CD8-positive, alpha-beta T cell (primary cell): ENCODE measurements at regions of chr1 and their contacts with region 1.

Region 1: GRCh38 chr1:160607011-160607671 is 27.8 kb upstream of the CD84 start:
- DNase-seq: peak in 8 of 9 experiments; percentile 35 to 91 (median 62)
- ATAC-seq: peak; percentile 99
- H3K4me3 ChIP-seq: no peak overlapping the region
- H3K4me3 Mint-ChIP-seq: peak overlapping the region; percentile 27
- H3K27ac ChIP-seq: peak overlapping the region in 1 of 2 experiments; percentile 35
- H3K27ac Mint-ChIP-seq: peak overlapping the region; percentile 88
- H3K4me1 ChIP-seq: peaks cover 14% of the 10 kb centered on the region
- H3K4me1 Mint-ChIP-seq: peaks cover 41% of the 10 kb centered on the region
- H3K27me3 ChIP-seq: no peaks in the 10 kb centered on the region
- H3K27me3 Mint-ChIP-seq: no peaks in the 10 kb centered on the region
- CTCF ChIP-seq: peak; percentile 84

Region 2: DNA sequence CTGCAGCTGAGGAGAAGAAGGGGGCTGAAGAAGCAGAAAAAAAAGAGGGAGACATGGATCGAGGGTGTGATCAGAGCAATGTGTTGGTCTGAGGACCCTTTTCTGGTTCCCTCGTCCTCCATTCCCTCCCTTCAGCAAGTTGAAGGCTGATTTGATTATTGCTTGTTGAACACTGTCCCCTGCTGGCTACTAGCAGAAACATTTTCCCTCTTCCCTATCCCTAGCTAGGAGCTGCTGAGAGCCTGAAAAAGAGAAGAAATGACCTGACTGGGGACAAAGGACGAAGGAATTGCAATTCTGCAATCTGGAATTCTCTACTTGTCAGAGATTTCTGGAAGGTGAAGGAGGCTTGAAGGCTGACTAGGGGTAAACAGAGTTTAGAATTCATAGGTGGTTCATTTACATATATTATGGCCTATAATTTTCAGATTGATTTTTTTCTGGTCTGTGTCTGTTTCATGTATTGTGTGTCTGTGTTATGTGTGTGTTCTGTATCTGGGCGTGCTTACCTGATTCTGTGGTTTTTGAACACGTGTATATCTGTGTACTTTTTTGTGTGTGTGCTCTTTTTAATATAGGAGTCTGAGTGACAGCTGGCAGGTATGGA is 230.5 kb before region 1 on chr1:
- CTCF ChIA-PET with region 1: interaction called, 19 read pairs
- POLR2A ChIA-PET with region 1: no interaction called
- intact Hi-C with region 1: loop called in 1 of 2 experiments (anchors 1 kb)
- DNase-seq: peak in 5 of 9 experiments; percentile 13 to 75 (median 53)
- ATAC-seq: peak; percentile 61
- H3K4me3 ChIP-seq: no peak overlapping the region
- H3K4me3 Mint-ChIP-seq: no peak overlapping the region
- H3K27ac ChIP-seq: no peak overlapping the region
- H3K27ac Mint-ChIP-seq: no peak overlapping the region
- H3K4me1 ChIP-seq: peaks cover 12% of the 10 kb centered on the region
- H3K4me1 Mint-ChIP-seq: peaks cover 15% of the 10 kb centered on the region
- H3K27me3 ChIP-seq: no peaks in the 10 kb centered on the region
- H3K27me3 Mint-ChIP-seq: no peaks in the 10 kb centered on the region
- CTCF ChIP-seq: peak; percentile 65

Region 3: DNA sequence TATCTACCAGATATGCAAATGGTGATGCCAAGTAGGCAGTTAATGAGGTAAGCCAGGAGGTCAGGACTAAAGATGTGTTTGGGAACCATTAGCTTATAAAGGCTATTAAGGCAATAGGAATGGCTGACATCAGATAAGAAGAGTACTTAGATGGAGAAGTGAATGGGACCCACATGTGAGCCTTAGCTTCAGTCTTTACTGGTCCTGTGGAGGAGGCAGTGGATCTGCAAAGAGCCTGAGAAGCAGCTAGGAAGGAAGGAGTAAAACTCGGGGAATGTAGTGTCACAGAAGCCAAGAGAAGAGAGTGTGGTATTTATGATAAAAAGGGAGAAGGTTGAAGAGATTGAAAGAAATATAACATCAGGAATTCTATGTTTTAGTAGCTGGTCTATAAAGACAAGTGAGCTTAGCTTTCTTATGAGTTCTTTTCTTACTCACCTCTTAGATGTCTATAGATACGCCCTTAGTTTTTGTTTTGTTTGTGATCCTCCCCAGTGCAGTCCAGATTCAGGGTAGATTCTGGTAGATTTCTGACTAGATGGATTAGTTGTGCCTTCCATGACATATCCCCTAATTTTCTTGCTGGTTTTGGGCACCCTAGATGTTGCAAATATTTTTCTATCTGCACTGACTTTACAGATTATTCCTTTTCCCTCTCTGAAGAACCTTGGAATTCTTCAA is 123.5 kb before region 1 on chr1:
- CTCF ChIA-PET with region 1: interaction called, 24 read pairs
- POLR2A ChIA-PET with region 1: no interaction called
- intact Hi-C with region 1: loop called in 1 of 2 experiments (anchors 5 kb)
- DNase-seq: no peak
- ATAC-seq: no peak
- H3K4me3 ChIP-seq: no peak overlapping the region
- H3K4me3 Mint-ChIP-seq: no peak overlapping the region
- H3K27ac ChIP-seq: peak overlapping the region in 1 of 2 experiments; percentile 36
- H3K27ac Mint-ChIP-seq: peak overlapping the region; percentile 79
- H3K4me1 ChIP-seq: peaks cover 25% of the 10 kb centered on the region
- H3K4me1 Mint-ChIP-seq: peaks cover 55% of the 10 kb centered on the region
- H3K27me3 ChIP-seq: no peaks in the 10 kb centered on the region
- H3K27me3 Mint-ChIP-seq: no peaks in the 10 kb centered on the region
- CTCF ChIP-seq: no peak

Region 4: DNA sequence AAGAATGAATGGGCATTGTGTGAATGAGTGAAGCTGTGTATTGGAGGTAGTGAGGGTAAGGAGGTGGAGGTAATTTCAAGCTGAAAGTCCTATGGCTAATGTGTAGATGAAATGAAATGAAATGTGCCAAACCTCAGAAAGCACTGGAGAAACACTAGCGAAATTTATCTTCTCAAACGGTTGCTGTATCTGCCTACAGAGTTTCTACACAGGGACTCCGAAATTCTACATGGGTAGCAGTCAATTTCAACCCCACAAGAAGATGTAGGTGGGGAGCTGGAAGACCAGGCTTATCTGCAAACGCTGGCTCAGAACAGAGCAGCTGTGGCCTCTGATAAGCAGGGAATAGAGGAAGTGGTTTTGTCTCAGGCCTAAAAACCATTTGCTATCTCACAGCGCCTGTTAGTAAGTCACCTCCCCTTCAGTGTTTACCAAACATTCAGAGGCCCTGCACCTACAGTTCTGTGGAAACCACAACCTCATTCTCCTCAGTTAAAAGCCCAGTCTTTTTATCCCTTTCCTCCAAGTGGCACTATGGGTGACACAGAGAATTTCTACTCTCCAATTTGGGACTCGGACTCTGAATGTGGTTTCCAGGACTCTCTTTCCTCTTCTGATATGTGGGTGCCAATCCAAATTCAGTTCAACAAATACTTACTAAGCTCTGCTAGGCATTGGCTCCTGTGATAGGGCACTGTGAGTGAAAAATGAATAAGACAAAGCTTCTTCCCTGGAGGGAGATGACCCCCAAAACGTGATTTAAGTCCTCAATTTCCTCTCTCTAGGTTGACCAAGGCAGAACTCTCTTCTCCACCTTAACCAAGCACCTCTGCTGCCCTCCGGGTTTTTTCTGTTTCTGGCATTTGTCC is 66.9 kb before region 1 on chr1:
- CTCF ChIA-PET with region 1: interaction called, 232 read pairs
- POLR2A ChIA-PET with region 1: interaction called, 9 read pairs
- intact Hi-C with region 1: loop called (anchors 1 kb)
- DNase-seq: peak; percentile 19 to 86 (median 60)
- ATAC-seq: peak; percentile 91
- H3K4me3 ChIP-seq: peak overlapping the region in 1 of 2 experiments; percentile 19
- H3K4me3 Mint-ChIP-seq: peak overlapping the region; percentile 20
- H3K27ac ChIP-seq: peak overlapping the region; percentile 36 to 76
- H3K27ac Mint-ChIP-seq: peak overlapping the region; percentile 95
- H3K4me1 ChIP-seq: peaks cover 55% of the 10 kb centered on the region
- H3K4me1 Mint-ChIP-seq: peaks cover 58% of the 10 kb centered on the region
- H3K27me3 ChIP-seq: no peaks in the 10 kb centered on the region
- H3K27me3 Mint-ChIP-seq: no peaks in the 10 kb centered on the region
- CTCF ChIP-seq: no peak

Region 5: GRCh38 chr1:160580221-160580812 is 26.8 kb before region 1 on chr1:
- CTCF ChIA-PET with region 1: interaction called, 22 read pairs
- POLR2A ChIA-PET with region 1: interaction called, 4 read pairs
- intact Hi-C with region 1: loop called in 1 of 2 experiments (anchors 2 kb)
- DNase-seq: peak in 1 of 9 experiments; percentile 27
- ATAC-seq: no peak
- H3K4me3 ChIP-seq: peak overlapping the region in 1 of 2 experiments; percentile 8
- H3K4me3 Mint-ChIP-seq: peak overlapping the region; percentile 44
- H3K27ac ChIP-seq: peak overlapping the region; percentile 24 to 70
- H3K27ac Mint-ChIP-seq: peak overlapping the region; percentile 84
- H3K4me1 ChIP-seq: peaks cover 58% of the 10 kb centered on the region
- H3K4me1 Mint-ChIP-seq: peaks cover 77% of the 10 kb centered on the region
- H3K27me3 ChIP-seq: no peaks in the 10 kb centered on the region
- H3K27me3 Mint-ChIP-seq: no peaks in the 10 kb centered on the region
- CTCF ChIP-seq: no peak

Region 6: GRCh38 chr1:160629286-160630210 is 22.4 kb after region 1 on chr1:
- CTCF ChIA-PET with region 1: interaction called, 32 read pairs
- POLR2A ChIA-PET with region 1: interaction called, 5 read pairs
- intact Hi-C with region 1: no loop called
- DNase-seq: peak; percentile 53 to 92 (median 75)
- ATAC-seq: peak; percentile 81
- H3K4me3 ChIP-seq: peak overlapping the region; percentile 19 to 38
- H3K4me3 Mint-ChIP-seq: peak overlapping the region; percentile 76
- H3K27ac ChIP-seq: peak overlapping the region; percentile 91 to 95
- H3K27ac Mint-ChIP-seq: peak overlapping the region; percentile 97
- H3K4me1 ChIP-seq: peaks cover 91% of the 10 kb centered on the region
- H3K4me1 Mint-ChIP-seq: peaks cover 99% of the 10 kb centered on the region
- H3K27me3 ChIP-seq: no peaks in the 10 kb centered on the region
- H3K27me3 Mint-ChIP-seq: no peaks in the 10 kb centered on the region
- CTCF ChIP-seq: no peak

Region 7: GRCh38 chr1:160813215-160813614 is 206.1 kb after region 1 on chr1:
- CTCF ChIA-PET with region 1: no interaction called
- POLR2A ChIA-PET with region 1: no interaction called
- intact Hi-C with region 1: no loop called
- DNase-seq: no peak
- ATAC-seq: peak; percentile 77
- H3K4me3 ChIP-seq: no peak overlapping the region
- H3K4me3 Mint-ChIP-seq: no peak overlapping the region
- H3K27ac ChIP-seq: no peak overlapping the region
- H3K27ac Mint-ChIP-seq: peak overlapping the region; percentile 84
- H3K4me1 ChIP-seq: peaks cover 17% of the 10 kb centered on the region
- H3K4me1 Mint-ChIP-seq: peaks cover 52% of the 10 kb centered on the region
- H3K27me3 ChIP-seq: no peaks in the 10 kb centered on the region
- H3K27me3 Mint-ChIP-seq: no peaks in the 10 kb centered on the region
- CTCF ChIP-seq: no peak

Region 8: DNA sequence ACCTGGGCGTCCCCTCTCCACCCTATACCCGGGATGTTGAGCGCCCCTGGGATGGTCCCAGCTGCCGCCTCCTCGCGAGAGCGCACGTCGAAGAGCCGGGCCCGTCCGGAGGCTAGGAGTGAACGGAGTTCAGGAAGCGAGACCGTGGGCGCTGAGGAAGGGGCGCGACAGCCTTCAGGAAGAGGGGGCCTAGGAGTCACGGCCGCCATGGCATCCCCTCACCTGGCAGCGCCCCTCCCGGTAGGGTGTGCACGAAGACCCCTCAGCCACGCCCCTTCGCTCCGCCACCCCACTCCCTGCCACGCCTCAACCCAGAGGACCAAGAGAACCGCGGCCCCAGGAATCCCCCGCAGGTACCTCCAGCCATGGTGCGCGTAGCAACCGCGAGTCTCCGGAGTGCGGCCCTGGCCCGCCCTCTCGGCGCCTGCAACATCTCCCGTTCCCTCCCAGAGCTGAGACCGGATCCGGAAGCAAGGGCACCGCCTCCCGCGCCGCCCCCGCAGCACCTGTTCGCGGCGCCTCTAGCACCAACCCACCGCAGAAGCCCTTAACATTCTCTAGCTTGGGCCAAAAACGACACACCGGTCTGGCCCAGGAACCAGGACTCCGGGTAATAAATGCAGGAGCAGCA is 431.5 kb after region 1 on chr1 and contains the start of gene TSTD1:
- CTCF ChIA-PET with region 1: no interaction called
- POLR2A ChIA-PET with region 1: no interaction called
- intact Hi-C with region 1: no loop called
- DNase-seq: peak; percentile 68 to 95 (median 86)
- ATAC-seq: peak; percentile 88
- H3K4me3 ChIP-seq: peak within 1 kb of the TSS; percentile 87 to 89
- H3K4me3 Mint-ChIP-seq: peak within 1 kb of the TSS; percentile 90
- H3K27ac ChIP-seq: peak within 1 kb of the TSS; percentile 75 to 83
- H3K27ac Mint-ChIP-seq: peak within 1 kb of the TSS; percentile 96
- H3K4me1 ChIP-seq: peaks cover 35% of the 10 kb centered on the region
- H3K4me1 Mint-ChIP-seq: peaks cover 56% of the 10 kb centered on the region
- H3K27me3 ChIP-seq: no peaks in the 10 kb centered on the region
- H3K27me3 Mint-ChIP-seq: no peaks in the 10 kb centered on the region
- CTCF ChIP-seq: no peak
- total RNA-seq, gene TSTD1: 44.8 to 46.6 TPM